ENCODE measurements at regions of chr1 and their contacts with region 1.

Region 1: GRCh38 chr1:25616095-25616986 is at the start of gene MAN1C1:
- DNase-seq: peak; percentile 81
- ATAC-seq: peak; percentile 79
- H3K4me3 Mint-ChIP-seq: peak within 1 kb of the TSS; percentile 76
- H3K27ac Mint-ChIP-seq: peak within 1 kb of the TSS; percentile 34
- H3K4me1 Mint-ChIP-seq: peaks cover 52% of the 10 kb centered on the region
- H3K27me3 Mint-ChIP-seq: peaks cover 65% of the 10 kb centered on the region
- total RNA-seq, gene MAN1C1: 15.5 to 20.0 TPM

Region 2: GRCh38 chr1:25492323-25492722 is 124.0 kb before region 1 on chr1:
- CTCF ChIA-PET with region 1: no interaction called
- DNase-seq: no peak
- ATAC-seq: no peak
- H3K4me3 Mint-ChIP-seq: no peak overlapping the region
- H3K27ac Mint-ChIP-seq: no peak overlapping the region
- H3K4me1 Mint-ChIP-seq: peaks cover 1% of the 10 kb centered on the region
- H3K27me3 Mint-ChIP-seq: no peaks in the 10 kb centered on the region

Region 3: DNA sequence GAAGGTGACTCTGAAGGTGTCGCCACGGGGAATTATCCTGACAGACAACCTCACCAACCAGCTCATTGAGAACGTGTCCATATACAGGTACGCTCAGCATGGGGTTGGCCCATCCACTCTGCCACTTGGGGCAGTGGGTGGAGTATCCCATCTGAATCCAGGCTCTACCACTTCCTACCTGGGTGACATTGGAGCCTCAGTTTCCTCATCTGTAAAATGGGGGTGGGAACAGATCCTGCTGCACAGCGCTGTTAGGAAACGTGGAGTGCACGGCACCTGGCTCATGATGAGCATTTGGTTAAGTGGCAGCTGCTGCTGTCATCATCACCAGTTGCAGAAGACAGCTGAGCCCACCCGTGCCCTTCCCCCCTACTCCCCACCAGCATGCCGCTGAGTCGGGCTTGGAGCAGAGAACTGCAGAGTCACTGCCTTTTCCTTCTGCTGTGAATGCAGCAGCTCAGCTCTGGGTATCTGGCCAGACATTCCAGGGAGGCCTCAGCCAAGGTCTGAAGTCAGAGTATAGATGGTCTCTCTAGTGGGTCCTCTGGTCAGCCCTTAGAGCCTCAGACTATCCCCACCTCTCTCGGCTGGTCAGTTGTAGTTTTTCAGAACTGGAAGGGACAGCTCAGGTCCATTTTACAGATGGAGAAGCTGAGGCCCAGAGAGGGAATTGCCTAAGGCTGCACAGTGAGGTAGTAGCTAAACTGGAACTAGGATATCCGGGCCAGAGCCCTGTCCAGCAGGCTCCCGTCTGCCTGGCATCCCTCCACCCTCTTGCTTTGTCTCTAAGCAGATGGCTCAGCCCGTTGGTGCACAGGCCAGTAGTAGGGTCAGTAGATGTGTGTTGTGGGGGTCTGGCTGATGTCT is 61.2 kb before region 1 on chr1:
- CTCF ChIA-PET with region 1: no interaction called
- DNase-seq: no peak
- ATAC-seq: no peak
- H3K4me3 Mint-ChIP-seq: no peak overlapping the region
- H3K27ac Mint-ChIP-seq: no peak overlapping the region
- H3K4me1 Mint-ChIP-seq: peaks cover 42% of the 10 kb centered on the region
- H3K27me3 Mint-ChIP-seq: peaks cover 4% of the 10 kb centered on the region

Region 4: GRCh38 chr1:25631750-25632485 is 15.6 kb after region 1 on chr1:
- CTCF ChIA-PET with region 1: interaction called, 11 read pairs
- DNase-seq: peak; percentile 36
- ATAC-seq: peak; percentile 66
- H3K4me3 Mint-ChIP-seq: peak overlapping the region; percentile 74
- H3K27ac Mint-ChIP-seq: peak overlapping the region; percentile 84
- H3K4me1 Mint-ChIP-seq: peaks cover 54% of the 10 kb centered on the region
- H3K27me3 Mint-ChIP-seq: peaks cover 17% of the 10 kb centered on the region

Region 5: GRCh38 chr1:25661036-25661815 is 44.9 kb after region 1 on chr1:
- CTCF ChIA-PET with region 1: no interaction called
- DNase-seq: no peak
- ATAC-seq: no peak
- H3K4me3 Mint-ChIP-seq: no peak overlapping the region
- H3K27ac Mint-ChIP-seq: no peak overlapping the region
- H3K4me1 Mint-ChIP-seq: no peaks in the 10 kb centered on the region
- H3K27me3 Mint-ChIP-seq: peaks cover 36% of the 10 kb centered on the region

Region 6: GRCh38 chr1:25675729-25676476 is 59.6 kb after region 1 on chr1:
- CTCF ChIA-PET with region 1: interaction called, 31 read pairs
- DNase-seq: peak; percentile 97
- ATAC-seq: peak; percentile 90
- H3K4me3 Mint-ChIP-seq: peak overlapping the region; percentile 52
- H3K27ac Mint-ChIP-seq: peak overlapping the region; percentile 64
- H3K4me1 Mint-ChIP-seq: peaks cover 50% of the 10 kb centered on the region
- H3K27me3 Mint-ChIP-seq: peaks cover 82% of the 10 kb centered on the region

Region 7: DNA sequence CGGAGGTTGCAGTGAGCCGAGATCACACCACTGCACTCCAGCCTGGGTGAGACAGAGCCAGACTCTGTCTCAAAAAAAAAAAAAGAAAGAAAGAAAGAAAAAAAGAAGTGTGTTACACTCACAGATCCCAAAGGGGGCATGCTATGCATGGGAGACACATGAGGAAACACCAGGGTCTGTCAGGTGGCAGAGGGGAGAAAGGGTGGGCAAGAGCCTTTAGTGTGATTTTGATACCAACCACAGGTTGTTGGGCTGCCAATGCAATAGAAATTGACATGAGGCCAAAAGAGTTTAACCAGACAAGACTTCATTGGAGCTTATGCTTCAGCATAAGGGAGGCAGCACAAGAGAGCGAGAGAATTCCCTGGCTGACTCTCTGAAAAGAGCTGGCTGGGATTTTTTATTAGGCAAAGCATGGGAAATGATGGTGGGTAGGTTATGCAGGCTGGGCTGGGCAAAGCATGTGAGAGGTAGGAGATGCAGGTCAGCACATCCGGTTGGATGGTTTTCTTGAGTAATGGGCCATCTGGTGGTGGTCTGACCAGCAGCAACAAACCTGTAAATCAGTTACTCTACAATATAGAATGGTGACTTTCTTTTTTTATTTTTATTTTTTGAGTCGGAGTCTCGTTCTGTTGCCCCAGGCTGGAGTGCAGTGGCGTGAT is 393.6 kb after region 1 on chr1:
- CTCF ChIA-PET with region 1: no interaction called
- DNase-seq: no peak
- ATAC-seq: no peak
- H3K4me3 Mint-ChIP-seq: no peak overlapping the region
- H3K27ac Mint-ChIP-seq: no peak overlapping the region
- H3K4me1 Mint-ChIP-seq: no peaks in the 10 kb centered on the region
- H3K27me3 Mint-ChIP-seq: peaks cover 12% of the 10 kb centered on the region